ENCODE measurements at regions of chr11 and their contacts with region 1.

Region 1: DNA sequence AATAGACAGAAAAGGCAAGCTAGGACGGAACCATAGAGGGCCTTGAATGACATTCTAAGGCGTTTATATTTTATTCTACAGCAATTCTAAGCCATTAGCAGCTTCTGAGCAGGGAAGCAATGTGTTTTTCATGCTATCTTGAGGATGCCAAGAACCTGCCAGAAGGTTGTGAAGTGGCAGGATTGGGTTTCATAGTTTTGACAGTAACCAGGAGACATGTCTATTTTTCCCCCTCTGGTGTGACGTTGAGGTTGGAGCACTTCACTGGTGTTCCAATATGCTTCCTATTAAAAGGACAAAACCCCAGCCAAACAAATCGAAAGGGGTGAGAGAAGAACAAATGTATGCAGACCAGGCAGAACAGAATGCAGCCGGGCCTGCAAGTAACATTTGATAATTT is 148.2 kb downstream of the SPATA19 start:
- DNase-seq: no peak
- ATAC-seq: peak; percentile 65

Region 2: DNA sequence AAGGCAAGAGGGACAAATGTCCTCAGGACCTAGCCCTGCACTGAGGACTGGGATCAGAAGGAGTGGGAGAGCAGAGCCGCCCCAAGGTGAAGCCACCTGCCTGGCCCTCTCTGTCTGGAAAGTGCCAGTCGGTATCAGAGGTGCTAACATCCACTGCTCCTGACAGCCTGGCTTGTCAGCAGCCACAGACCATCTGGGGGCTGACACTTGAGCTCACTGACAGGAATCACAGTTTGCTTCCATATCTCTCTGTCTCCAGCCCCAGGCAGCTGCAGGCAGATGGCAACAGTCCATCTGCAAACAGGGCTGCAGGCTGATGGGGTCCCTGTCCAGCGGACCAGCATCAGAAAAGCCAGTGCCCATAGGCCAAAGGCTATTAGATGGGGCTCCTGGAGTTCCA is 170.4 kb before region 1 on chr11:
- intact Hi-C with region 1: loop called (anchors 5 kb)
- DNase-seq: no peak
- ATAC-seq: peak; percentile 92

Region 3: GRCh38 chr11:133636711-133637355 is 60.3 kb before region 1 on chr11:
- intact Hi-C with region 1: no loop called
- DNase-seq: no peak
- ATAC-seq: no peak

Region 4: DNA sequence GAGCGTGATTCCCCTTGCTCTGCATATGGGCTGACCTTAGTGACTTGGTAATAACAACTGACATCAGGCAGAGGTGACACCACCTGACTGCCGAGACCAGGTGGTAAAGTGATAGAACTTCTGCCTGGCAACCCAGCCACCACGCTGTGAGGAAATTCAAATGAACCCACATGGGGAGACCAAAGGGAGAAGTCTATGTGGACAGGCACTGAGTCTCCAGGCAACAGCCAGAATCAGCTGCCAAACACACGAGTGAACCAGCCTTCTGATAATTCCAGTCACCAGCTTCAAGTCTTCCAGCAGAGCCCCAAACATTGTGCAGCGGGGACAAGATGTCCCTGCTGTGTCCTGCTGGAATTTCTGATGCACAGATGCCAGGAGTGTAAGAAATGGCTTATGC is 118.5 kb after region 1 on chr11:
- intact Hi-C with region 1: loop called (anchors 2 kb)
- DNase-seq: no peak
- ATAC-seq: peak; percentile 75